ENCODE measurements at regions of chr19 and their contacts with region 1.

Region 1: DNA sequence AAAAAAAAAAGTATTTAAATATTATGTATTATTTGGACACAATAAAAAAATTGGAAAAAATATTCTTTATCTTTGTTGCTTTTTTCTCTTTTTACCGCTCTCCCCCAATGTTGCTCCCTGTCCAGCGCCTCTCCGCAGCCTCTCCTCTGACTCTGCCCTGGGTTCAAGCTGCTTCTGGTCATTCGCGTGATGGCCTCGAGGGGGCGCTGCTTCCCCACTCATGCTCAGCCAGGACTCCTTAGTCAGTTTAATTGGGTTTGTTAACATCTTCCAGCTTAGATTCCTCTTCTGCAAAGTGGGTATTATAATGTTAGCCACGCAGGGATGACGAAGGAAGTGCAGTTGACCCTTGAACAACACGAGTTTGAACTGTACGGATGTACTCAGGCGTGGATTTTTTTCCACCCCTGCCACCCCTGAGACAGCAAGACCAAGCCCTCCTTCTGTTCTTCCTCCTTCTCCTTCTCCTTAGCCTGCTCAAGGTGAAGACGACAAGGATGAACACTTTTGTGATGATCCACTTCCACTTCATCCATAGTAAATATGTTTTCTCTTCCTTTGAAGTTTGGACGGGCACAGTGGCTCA is 4.9 kb upstream of the NWD1 start:
- DNase-seq: peak; percentile 66
- H3K4me3 ChIP-seq: no peak overlapping the region
- H3K27ac ChIP-seq: no peak overlapping the region
- H3K4me1 ChIP-seq: no peaks in the 10 kb centered on the region
- H3K27me3 ChIP-seq: no peaks in the 10 kb centered on the region
- CTCF ChIP-seq: peak; percentile 87
- POLR2A ChIP-seq: no peak

Region 2: DNA sequence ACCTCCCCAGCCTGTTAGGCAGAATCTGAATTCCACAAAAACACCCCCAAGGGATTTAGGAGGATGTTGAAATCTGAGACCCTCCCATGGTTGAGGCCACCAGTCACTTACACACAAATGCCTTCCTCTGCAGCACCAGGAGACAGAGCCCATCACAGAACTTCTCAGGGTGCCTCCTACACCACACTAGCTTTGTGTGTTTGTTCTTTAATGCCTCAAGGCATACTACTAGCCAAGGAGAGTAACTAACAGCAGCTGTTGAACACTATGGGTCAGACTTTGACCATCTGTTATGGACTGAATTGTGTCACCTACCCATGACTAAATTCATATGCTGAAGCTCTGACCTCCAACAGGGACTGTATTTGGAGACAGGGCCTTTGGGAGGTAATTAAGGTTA is 77.3 kb before region 1 on chr19:
- CTCF ChIA-PET with region 1: no interaction called
- POLR2A ChIA-PET with region 1: no interaction called
- dilution Hi-C with region 1: no loop called
- intact Hi-C with region 1: no loop called
- DNase-seq: no peak
- H3K4me3 ChIP-seq: no peak overlapping the region
- H3K27ac ChIP-seq: no peak overlapping the region
- H3K4me1 ChIP-seq: no peaks in the 10 kb centered on the region
- H3K27me3 ChIP-seq: no peaks in the 10 kb centered on the region
- CTCF ChIP-seq: no peak
- POLR2A ChIP-seq: no peak

Region 3: GRCh38 chr19:16726916-16727315 is 12.1 kb after region 1 on chr19:
- CTCF ChIA-PET with region 1: interaction called, 22 read pairs
- POLR2A ChIA-PET with region 1: interaction called, 4 read pairs
- dilution Hi-C with region 1: no loop called
- intact Hi-C with region 1: no loop called
- DNase-seq: no peak
- H3K4me3 ChIP-seq: no peak overlapping the region
- H3K27ac ChIP-seq: no peak overlapping the region
- H3K4me1 ChIP-seq: no peaks in the 10 kb centered on the region
- H3K27me3 ChIP-seq: no peaks in the 10 kb centered on the region
- CTCF ChIP-seq: no peak
- POLR2A ChIP-seq: no peak

Region 4: DNA sequence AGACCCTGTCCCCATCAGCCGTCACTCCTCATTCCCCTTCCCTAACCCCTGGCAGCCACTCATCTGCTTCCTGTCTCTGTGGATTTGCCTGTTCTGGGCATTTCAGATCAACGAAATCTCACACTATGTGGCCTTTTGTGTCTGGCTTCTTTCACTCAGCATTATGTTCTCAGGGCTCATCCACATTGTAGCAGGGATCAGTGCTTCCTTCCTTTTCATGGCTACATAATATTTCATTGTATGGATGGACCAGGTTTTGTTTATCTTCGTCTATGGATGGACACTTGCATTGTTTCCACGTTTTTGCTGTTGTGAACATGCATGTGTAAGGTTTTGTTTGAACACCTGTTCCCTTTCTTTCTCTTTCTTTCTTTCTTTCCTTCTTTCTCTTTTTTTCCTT is 46.2 kb after region 1 on chr19:
- CTCF ChIA-PET with region 1: interaction called, 10 read pairs
- POLR2A ChIA-PET with region 1: no interaction called
- dilution Hi-C with region 1: no loop called
- intact Hi-C with region 1: no loop called
- DNase-seq: no peak
- H3K4me3 ChIP-seq: no peak overlapping the region
- H3K27ac ChIP-seq: no peak overlapping the region
- H3K4me1 ChIP-seq: no peaks in the 10 kb centered on the region
- H3K27me3 ChIP-seq: peaks cover 0 to 3% of the 10 kb centered on the region in 2 experiments
- CTCF ChIP-seq: no peak
- POLR2A ChIP-seq: no peak

Region 5: DNA sequence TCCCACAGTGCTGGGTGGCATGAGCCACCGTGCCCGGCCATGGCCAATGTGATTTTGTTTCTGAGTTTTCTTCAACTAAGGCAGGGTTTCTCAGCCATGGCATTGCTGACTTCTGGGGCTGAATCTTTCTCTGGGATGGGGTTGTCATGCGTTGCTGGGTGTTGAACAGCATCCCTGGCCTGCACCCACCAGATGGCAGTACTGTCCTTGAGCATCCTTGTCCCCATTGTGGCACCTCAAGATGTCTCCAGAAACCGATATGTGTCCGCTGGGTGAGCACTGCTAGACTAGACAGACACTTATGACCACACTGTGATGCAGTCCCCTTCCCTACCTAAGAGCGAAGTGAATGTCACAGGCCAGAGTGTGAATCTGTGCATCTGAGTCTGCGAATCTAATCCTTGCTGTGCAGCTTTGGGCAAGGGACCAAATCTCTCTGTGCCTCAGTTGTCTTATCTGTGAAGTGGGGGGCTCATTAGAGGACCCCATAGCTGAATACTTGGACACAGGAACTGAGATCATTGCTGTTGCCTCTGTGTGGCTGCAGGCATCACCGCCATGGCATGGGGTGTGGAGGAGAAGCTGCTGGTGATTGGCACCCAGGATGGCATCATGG is 64.1 kb after region 1 on chr19:
- CTCF ChIA-PET with region 1: interaction called, 15 read pairs
- POLR2A ChIA-PET with region 1: no interaction called
- dilution Hi-C with region 1: no loop called
- intact Hi-C with region 1: no loop called
- DNase-seq: peak; percentile 59
- H3K4me3 ChIP-seq: no peak overlapping the region
- H3K27ac ChIP-seq: no peak overlapping the region
- H3K4me1 ChIP-seq: no peaks in the 10 kb centered on the region
- H3K27me3 ChIP-seq: peaks cover 1 to 6% of the 10 kb centered on the region in 2 experiments
- CTCF ChIP-seq: peak; percentile 59 to 80
- POLR2A ChIP-seq: no peak

Region 6: GRCh38 chr19:16860118-16860517 is 145.3 kb after region 1 on chr19:
- CTCF ChIA-PET with region 1: no interaction called
- POLR2A ChIA-PET with region 1: no interaction called
- dilution Hi-C with region 1: no loop called
- intact Hi-C with region 1: no loop called
- DNase-seq: no peak
- H3K4me3 ChIP-seq: no peak overlapping the region
- H3K27ac ChIP-seq: no peak overlapping the region
- H3K4me1 ChIP-seq: no peaks in the 10 kb centered on the region
- H3K27me3 ChIP-seq: no peaks in the 10 kb centered on the region
- CTCF ChIP-seq: no peak
- POLR2A ChIP-seq: no peak

Region 7: DNA sequence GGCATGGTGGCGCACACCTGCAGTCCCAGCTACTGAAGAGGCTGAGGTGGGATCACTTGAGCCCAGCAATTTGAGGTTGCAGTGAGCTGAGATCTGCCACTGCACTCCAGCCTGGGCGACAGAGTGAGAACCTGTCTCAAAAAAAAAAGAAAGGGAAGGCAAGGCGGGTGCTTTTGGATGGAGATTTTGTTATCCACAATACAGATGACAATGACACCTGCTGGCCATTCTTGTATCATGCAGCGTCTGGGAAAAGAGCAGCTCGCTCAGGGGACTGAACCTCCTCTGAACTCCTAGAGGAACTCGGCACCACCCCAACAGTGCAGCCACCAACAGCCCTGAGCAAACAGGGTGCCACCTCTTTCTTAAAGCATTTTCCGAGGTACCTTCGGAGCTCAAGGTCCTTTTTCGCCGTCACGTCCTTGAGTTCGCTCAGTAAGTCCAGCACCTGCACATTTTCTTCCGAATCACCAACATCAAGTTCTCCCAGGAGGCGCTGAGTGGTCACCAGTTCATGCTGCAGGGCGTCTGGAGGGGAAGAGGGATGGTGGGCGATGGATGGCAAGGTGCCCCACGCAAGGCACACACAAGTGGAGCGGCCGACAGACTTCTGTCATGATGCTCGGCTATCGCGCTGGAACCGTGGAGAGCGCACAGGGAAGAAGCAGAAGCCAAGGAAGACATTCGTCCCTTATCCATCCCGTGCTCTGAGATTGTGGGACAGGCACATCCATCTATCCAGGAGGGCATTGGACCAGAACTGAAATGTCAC is 337.8 kb after region 1 on chr19:
- CTCF ChIA-PET with region 1: interaction called, 69 read pairs
- POLR2A ChIA-PET with region 1: no interaction called
- dilution Hi-C with region 1: no loop called
- intact Hi-C with region 1: loop called (anchors 1 kb)
- DNase-seq: peak; percentile 55
- H3K4me3 ChIP-seq: no peak overlapping the region
- H3K27ac ChIP-seq: no peak overlapping the region
- H3K4me1 ChIP-seq: no peaks in the 10 kb centered on the region
- H3K27me3 ChIP-seq: no peaks in the 10 kb centered on the region
- CTCF ChIP-seq: peak; percentile 52 to 68
- POLR2A ChIP-seq: no peak

Measured in endothelial cell of umbilical vein (primary cell).